AG04450 (cell line): ENCODE measurements at regions of chr17 and their contacts with region 1.

Region 1: DNA sequence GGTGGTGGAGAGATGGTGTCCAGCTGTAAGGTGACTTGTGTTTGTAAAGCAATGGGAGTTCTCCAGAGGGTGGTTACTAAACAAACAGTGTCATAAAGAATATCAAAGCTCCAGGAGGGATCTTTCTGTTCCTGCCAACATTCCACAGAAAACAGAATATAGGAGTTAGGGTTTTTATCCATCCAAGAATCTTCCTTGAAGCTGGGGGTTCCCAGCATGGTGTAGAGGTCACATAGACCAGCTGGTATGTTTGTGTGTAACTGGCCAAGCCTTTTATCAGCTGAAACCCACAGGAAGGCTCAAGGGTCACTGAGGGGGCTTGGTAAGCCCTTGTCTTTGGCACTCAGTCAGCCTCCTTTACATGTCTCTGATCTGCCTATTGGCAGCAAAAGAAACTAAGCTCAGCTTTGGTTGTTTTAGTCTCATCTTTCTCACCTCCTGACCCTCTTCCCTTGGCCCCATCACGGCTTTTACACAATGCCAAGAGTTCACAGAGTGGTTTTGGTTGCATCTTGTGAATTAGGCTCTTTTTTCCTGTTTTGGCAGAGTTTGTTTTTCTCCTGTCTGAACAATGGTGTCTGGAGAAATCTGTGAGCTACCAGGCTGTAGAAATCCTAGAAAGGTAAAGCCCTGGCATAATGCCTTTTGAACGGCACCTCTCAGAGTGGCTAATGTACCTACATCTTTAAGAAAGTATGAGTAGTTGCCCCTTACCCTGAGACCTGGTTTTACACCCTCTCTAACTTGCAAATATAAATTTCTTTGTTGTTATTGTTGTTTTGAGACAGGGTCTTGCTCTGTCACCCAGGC is 4.6 kb downstream of the CNTD1 start:
- DNase-seq: peak; percentile 16
- H3K4me3 ChIP-seq: no peak overlapping the region
- H3K27ac ChIP-seq: peak overlapping the region; percentile 54
- H3K27me3 ChIP-seq: peaks cover 3% of the 10 kb centered on the region
- CTCF ChIP-seq: no peak

Region 2: GRCh38 chr17:42908872-42909700 is 105.8 kb after region 1 on chr17:
- CTCF ChIA-PET with region 1: no interaction called
- POLR2A ChIA-PET with region 1: interaction called, 12 read pairs
- DNase-seq: peak; percentile 6
- H3K4me3 ChIP-seq: no peak overlapping the region
- H3K27ac ChIP-seq: no peak overlapping the region
- H3K27me3 ChIP-seq: peaks cover 29% of the 10 kb centered on the region
- CTCF ChIP-seq: no peak